CD8-positive, alpha-beta T cell (primary cell): ENCODE measurements at regions of chr17 and their contacts with region 1.

Region 1: GRCh38 chr17:50087246-50087911 is 7.8 kb upstream of the PDK2 start:
- DNase-seq: peak; percentile 60 to 85 (median 73)
- ATAC-seq: peak; percentile 93
- H3K4me3 ChIP-seq: no peak overlapping the region
- H3K4me3 Mint-ChIP-seq: no peak overlapping the region
- H3K27ac ChIP-seq: no peak overlapping the region
- H3K27ac Mint-ChIP-seq: no peak overlapping the region
- H3K4me1 ChIP-seq: no peaks in the 10 kb centered on the region
- H3K4me1 Mint-ChIP-seq: no peaks in the 10 kb centered on the region
- H3K27me3 ChIP-seq: no peaks in the 10 kb centered on the region
- H3K27me3 Mint-ChIP-seq: no peaks in the 10 kb centered on the region
- CTCF ChIP-seq: peak; percentile 94

Region 2: DNA sequence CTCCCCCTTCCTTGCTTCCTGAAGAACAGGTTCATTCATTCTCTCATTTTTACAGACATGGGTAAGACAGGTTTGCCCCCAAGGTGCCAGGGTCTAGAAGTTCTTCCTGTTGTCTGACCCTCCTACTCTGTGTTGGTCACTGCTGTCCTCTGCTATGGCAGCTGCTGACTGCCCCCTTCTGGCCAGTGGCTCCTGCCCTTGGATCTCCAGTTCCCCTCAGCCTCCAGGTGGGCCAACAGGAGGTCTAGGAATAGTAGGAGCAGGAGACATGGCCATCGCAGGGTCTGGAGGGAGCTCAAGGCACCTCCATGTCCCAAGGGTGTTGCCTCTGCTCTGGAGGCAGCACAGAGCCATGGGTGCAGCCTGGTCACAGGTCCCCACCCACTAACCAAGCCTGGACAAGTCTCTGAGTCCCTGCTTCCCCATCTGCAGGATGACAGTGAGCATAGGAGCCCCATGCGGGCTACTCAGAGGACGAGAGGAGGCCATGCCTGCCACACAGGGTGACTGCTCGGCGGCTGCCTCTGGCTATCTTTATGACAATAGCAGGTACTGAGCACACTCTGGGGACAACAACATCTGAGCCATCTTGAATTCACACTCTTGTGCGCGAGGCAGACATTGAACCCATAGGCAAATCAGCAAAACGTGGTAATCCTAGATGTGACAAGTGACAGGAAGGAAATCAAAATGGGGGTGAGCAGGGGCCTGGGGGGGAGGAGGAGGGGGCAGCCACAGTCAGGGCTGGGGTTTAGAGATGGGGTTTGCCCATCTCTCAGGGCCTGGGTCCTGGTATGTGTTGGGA is 538.7 kb before region 1 on chr17:
- CTCF ChIA-PET with region 1: no interaction called
- POLR2A ChIA-PET with region 1: no interaction called
- intact Hi-C with region 1: no loop called
- DNase-seq: no peak
- ATAC-seq: no peak
- H3K4me3 ChIP-seq: no peak overlapping the region
- H3K4me3 Mint-ChIP-seq: no peak overlapping the region
- H3K27ac ChIP-seq: no peak overlapping the region
- H3K27ac Mint-ChIP-seq: no peak overlapping the region
- H3K4me1 ChIP-seq: no peaks in the 10 kb centered on the region
- H3K4me1 Mint-ChIP-seq: no peaks in the 10 kb centered on the region
- H3K27me3 ChIP-seq: peaks cover 0 to 2% of the 10 kb centered on the region in 2 experiments
- H3K27me3 Mint-ChIP-seq: peaks cover 4% of the 10 kb centered on the region
- CTCF ChIP-seq: no peak

Region 3: DNA sequence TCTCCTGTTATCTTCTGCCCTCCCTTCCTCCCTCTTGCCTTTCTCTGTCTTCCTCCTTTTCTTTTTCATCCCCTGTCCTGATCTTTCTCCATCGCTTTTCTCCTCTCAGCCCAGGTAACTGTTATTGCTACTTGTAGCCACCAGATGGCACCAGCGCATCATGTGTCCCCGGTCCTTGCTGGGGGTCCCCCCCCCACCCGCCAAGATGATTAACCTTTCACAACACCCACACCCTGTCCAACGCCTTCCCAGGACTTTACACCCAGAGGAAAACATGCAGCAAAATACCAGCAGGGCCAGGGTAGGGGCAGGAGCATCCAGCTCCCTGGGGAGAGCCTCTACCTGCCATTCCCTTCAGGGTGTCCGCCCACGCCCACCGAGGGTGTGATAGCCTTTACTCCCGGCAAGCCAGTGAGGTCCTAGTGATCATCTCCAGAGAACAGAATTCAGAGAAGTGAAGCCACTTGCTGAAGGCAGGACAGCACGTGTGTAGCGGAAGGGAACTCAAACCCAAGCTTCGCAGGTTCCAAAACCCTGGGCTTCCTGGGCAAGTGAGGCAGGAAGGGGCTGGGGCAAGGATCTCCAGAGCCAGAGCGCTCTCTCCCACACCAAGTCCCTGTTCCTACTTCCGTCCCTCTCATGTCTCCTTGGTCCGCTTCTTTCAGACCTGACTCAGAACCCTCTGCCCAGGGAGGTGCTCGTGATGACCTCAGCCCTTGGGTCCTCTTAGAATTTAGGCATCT is 226.1 kb before region 1 on chr17:
- CTCF ChIA-PET with region 1: no interaction called
- POLR2A ChIA-PET with region 1: no interaction called
- intact Hi-C with region 1: loop called in 1 of 2 experiments (anchors 1 kb)
- DNase-seq: peak; percentile 14 to 81 (median 66)
- ATAC-seq: peak; percentile 90
- H3K4me3 ChIP-seq: no peak overlapping the region
- H3K4me3 Mint-ChIP-seq: no peak overlapping the region
- H3K27ac ChIP-seq: no peak overlapping the region
- H3K27ac Mint-ChIP-seq: no peak overlapping the region
- H3K4me1 ChIP-seq: no peaks in the 10 kb centered on the region
- H3K4me1 Mint-ChIP-seq: peaks cover 4% of the 10 kb centered on the region
- H3K27me3 ChIP-seq: peaks cover 0 to 3% of the 10 kb centered on the region in 2 experiments
- H3K27me3 Mint-ChIP-seq: peaks cover 11% of the 10 kb centered on the region
- CTCF ChIP-seq: peak; percentile 93

Region 4: DNA sequence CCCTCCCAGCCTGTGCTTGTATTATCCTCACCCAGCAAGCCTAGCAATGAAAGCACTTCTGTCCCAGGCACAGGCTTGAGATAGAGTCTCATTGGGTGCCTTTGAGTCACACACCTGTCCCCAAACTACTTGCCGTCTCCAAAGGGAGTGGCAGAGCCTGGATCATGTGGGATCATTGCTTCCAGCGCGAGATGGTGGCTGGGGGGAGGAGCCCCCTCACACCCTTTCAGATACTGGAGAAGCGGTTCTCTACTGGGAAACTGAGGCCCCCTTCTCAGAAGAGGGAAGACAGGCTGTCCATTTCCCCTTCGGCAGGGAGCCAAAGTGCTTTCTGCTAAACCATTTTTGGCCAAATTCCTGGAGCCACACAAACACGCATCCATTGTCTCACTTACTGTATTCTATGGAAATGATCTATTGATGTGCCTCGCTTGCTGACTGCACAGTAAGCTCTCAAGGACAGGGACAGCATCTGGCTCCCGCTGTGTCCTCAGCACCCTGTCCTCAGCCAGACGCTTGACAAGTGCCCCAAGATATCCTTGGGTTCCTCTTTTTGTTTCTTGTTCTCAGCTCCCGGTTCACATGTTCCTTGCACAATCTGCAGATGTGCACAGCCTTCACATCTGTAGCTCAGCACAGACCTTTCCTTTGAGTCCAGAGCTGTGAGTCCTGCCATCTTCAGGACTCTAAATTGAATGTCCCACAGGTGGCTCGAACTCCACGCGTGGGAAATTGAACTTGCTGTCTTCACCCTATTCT is 66.4 kb before region 1 on chr17:
- CTCF ChIA-PET with region 1: interaction called, 179 read pairs
- POLR2A ChIA-PET with region 1: interaction called, 4 read pairs
- intact Hi-C with region 1: no loop called
- DNase-seq: no peak
- ATAC-seq: no peak
- H3K4me3 ChIP-seq: no peak overlapping the region
- H3K4me3 Mint-ChIP-seq: no peak overlapping the region
- H3K27ac ChIP-seq: no peak overlapping the region
- H3K27ac Mint-ChIP-seq: no peak overlapping the region
- H3K4me1 ChIP-seq: no peaks in the 10 kb centered on the region
- H3K4me1 Mint-ChIP-seq: no peaks in the 10 kb centered on the region
- H3K27me3 ChIP-seq: no peaks in the 10 kb centered on the region
- H3K27me3 Mint-ChIP-seq: peaks cover 19% of the 10 kb centered on the region
- CTCF ChIP-seq: no peak

Region 5: DNA sequence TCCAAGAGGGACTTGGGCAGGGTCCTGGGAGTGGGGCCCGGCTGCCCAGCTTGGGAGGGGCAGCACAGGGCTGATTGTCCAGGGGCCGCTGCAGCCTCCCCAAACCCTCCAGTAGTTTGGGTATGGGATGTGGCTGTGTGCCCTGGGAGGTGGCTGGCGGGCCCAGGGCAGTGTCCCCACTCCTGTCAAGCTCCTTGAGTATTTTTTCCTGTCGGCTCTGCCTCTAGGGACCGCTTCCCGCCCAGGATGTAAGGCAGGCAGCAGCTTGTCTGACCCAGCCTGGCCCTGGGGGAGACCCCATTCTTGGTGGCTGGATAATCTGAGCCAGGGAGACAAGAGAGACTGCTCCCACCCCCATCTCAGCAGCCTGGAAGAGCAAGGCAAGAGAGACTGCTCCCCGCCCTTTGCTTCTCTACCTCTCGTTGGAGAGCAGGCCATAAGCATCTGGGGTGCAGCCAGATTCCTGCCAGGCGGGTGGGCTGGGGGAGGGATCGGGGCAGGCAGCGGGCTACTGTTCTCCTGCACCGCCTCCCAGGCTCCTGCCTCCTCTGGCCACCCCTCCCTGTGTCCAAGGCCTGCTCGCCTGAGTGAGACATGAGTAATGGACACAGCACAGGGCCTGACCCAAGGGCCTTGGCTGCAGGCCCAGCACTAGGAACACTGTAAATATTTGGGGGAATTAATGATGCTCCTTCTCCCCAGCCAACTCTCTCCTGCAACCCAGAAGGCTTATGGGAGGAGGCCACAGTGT is 49.9 kb before region 1 on chr17:
- CTCF ChIA-PET with region 1: interaction called, 179 read pairs
- POLR2A ChIA-PET with region 1: no interaction called
- intact Hi-C with region 1: no loop called
- DNase-seq: no peak
- ATAC-seq: no peak
- H3K4me3 ChIP-seq: no peak overlapping the region
- H3K4me3 Mint-ChIP-seq: no peak overlapping the region
- H3K27ac ChIP-seq: no peak overlapping the region
- H3K27ac Mint-ChIP-seq: no peak overlapping the region
- H3K4me1 ChIP-seq: no peaks in the 10 kb centered on the region
- H3K4me1 Mint-ChIP-seq: no peaks in the 10 kb centered on the region
- H3K27me3 ChIP-seq: no peaks in the 10 kb centered on the region
- H3K27me3 Mint-ChIP-seq: peaks cover 9% of the 10 kb centered on the region
- CTCF ChIP-seq: no peak

Region 6: GRCh38 chr17:50064258-50065001 is 22.9 kb before region 1 on chr17:
- CTCF ChIA-PET with region 1: interaction called, 10 read pairs
- POLR2A ChIA-PET with region 1: no interaction called
- intact Hi-C with region 1: no loop called
- DNase-seq: no peak
- ATAC-seq: no peak
- H3K4me3 ChIP-seq: no peak overlapping the region
- H3K4me3 Mint-ChIP-seq: no peak overlapping the region
- H3K27ac ChIP-seq: no peak overlapping the region
- H3K27ac Mint-ChIP-seq: no peak overlapping the region
- H3K4me1 ChIP-seq: no peaks in the 10 kb centered on the region
- H3K4me1 Mint-ChIP-seq: no peaks in the 10 kb centered on the region
- H3K27me3 ChIP-seq: no peaks in the 10 kb centered on the region
- H3K27me3 Mint-ChIP-seq: no peaks in the 10 kb centered on the region
- CTCF ChIP-seq: no peak

Region 7: GRCh38 chr17:50102164-50102991 is 15.0 kb after region 1 on chr17:
- CTCF ChIA-PET with region 1: interaction called, 42 read pairs
- POLR2A ChIA-PET with region 1: no interaction called
- intact Hi-C with region 1: no loop called
- DNase-seq: no peak
- ATAC-seq: no peak
- H3K4me3 ChIP-seq: no peak overlapping the region
- H3K4me3 Mint-ChIP-seq: no peak overlapping the region
- H3K27ac ChIP-seq: no peak overlapping the region
- H3K27ac Mint-ChIP-seq: no peak overlapping the region
- H3K4me1 ChIP-seq: no peaks in the 10 kb centered on the region
- H3K4me1 Mint-ChIP-seq: peaks cover 15% of the 10 kb centered on the region
- H3K27me3 ChIP-seq: no peaks in the 10 kb centered on the region
- H3K27me3 Mint-ChIP-seq: no peaks in the 10 kb centered on the region
- CTCF ChIP-seq: no peak

Region 8: DNA sequence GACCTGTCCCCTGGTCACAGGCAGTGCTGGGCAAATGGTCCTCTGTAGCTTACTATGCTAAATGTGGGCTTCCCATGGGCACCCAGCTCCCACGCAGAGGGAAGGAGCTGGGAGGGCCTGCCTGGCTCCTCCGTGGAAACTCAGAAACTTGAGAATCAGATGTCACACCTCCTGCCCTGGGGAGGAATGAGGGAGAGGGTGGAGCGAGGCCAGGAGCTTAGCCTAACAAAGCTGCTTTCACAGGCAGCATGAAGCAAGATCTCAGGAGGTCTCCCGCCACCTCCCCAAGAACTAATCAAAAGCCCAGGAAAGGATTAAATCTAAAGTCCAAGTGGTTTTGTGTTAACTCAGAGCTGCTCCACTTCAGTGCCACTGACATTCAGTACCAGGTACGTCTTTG is 224.9 kb after region 1 on chr17:
- CTCF ChIA-PET with region 1: no interaction called
- POLR2A ChIA-PET with region 1: no interaction called
- intact Hi-C with region 1: no loop called
- DNase-seq: no peak
- ATAC-seq: no peak
- H3K4me3 ChIP-seq: no peak overlapping the region
- H3K4me3 Mint-ChIP-seq: no peak overlapping the region
- H3K27ac ChIP-seq: no peak overlapping the region
- H3K27ac Mint-ChIP-seq: no peak overlapping the region
- H3K4me1 ChIP-seq: no peaks in the 10 kb centered on the region
- H3K4me1 Mint-ChIP-seq: no peaks in the 10 kb centered on the region
- H3K27me3 ChIP-seq: no peaks in the 10 kb centered on the region
- H3K27me3 Mint-ChIP-seq: peaks cover 25% of the 10 kb centered on the region
- CTCF ChIP-seq: no peak